A673 (cell line): ENCODE measurements at regions of chr13 and their contacts with region 1.

Region 1: GRCh38 chr13:102845630-102846260 is at the start of gene ERCC5:
- DNase-seq: peak; percentile 97
- H3K4me3 ChIP-seq: peak within 1 kb of the TSS; percentile 89
- H3K27ac ChIP-seq: peak within 1 kb of the TSS; percentile 92
- H3K4me1 ChIP-seq: peaks cover 9% of the 10 kb centered on the region
- H3K27me3 ChIP-seq: no peaks in the 10 kb centered on the region
- CTCF ChIP-seq: no peak
- total RNA-seq, gene ERCC5: 36.2 and 37.6 TPM in 2 replicates

Region 2: GRCh38 chr13:102580552-102581169 is 265.1 kb before region 1 on chr13:
- CTCF ChIA-PET with region 1: no interaction called
- POLR2A ChIA-PET with region 1: no interaction called
- intact Hi-C with region 1: loop called (anchors 1 kb)
- DNase-seq: peak; percentile 69
- H3K4me3 ChIP-seq: no peak overlapping the region
- H3K27ac ChIP-seq: no peak overlapping the region
- H3K4me1 ChIP-seq: no peaks in the 10 kb centered on the region
- H3K27me3 ChIP-seq: no peaks in the 10 kb centered on the region
- CTCF ChIP-seq: peak; percentile 79

Region 3: DNA sequence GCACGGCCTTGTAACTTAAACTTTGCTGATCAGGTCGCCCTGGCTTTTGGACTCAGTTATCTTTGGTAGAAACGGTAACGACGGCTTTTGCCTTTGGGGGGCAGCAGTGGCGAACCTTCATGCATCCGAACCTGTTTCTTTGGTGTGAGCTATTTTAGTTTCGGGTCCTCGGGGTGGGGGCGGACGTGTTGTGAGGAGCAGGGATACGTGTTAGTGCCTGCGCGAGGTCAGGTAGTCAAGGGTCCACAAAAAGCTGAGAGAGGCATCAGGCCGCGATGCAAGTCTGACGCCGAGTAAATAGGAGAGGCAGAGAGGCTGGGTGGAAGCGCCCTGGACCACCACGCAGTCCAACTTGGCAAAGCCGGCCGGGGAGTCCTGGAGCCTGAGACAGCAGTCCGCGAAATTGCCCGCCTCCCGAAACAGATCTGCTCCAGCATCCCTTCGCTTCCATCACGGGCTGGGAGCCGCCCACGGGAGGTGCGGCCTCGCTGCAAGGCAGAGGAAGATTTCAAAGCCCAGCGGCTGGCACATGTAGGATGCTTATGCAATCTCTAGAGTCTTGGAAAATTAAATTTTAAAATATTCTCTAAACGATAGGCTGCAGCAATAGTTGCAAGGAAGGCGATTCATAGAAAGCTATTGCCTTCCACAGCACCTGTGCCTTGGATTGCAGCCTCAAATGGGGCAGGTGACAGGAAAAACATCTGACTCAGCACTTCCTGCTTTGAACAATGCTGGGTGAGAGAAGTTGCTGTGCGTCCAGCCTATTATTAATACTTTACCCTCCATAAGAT is 253.6 kb before region 1 on chr13:
- CTCF ChIA-PET with region 1: interaction called, 3 read pairs
- POLR2A ChIA-PET with region 1: interaction called, 5 read pairs
- intact Hi-C with region 1: loop called (anchors 1 kb)
- DNase-seq: peak; percentile 86
- H3K4me3 ChIP-seq: peak overlapping the region; percentile 59
- H3K27ac ChIP-seq: peak overlapping the region; percentile 11
- H3K4me1 ChIP-seq: peaks cover 12% of the 10 kb centered on the region
- H3K27me3 ChIP-seq: no peaks in the 10 kb centered on the region
- CTCF ChIP-seq: peak; percentile 84

Region 4: DNA sequence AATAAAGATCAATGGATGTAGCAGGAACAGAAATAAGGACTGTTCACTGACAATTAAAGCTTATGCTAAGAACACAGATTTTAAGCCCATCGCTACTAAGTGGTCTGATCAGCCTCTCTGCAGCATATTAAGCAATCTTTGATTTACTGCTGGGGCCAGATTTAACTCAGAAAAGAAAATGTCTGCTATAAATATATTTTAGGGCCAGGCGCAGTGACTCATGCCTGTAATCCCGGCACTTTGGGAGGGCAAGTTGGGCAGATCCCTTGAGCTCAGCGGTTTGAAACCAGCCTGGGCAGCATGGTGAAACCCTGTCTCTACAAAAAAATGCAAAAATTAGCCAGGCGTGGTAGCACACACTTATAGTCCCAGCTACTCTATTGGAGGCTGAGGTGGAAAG is 193.9 kb before region 1 on chr13:
- CTCF ChIA-PET with region 1: no interaction called
- POLR2A ChIA-PET with region 1: no interaction called
- intact Hi-C with region 1: loop called (anchors 5 kb)
- DNase-seq: peak; percentile 85
- H3K4me3 ChIP-seq: no peak overlapping the region
- H3K27ac ChIP-seq: peak overlapping the region; percentile 49
- H3K4me1 ChIP-seq: peaks cover 24% of the 10 kb centered on the region
- H3K27me3 ChIP-seq: no peaks in the 10 kb centered on the region
- CTCF ChIP-seq: no peak

Region 5: GRCh38 chr13:102724923-102725322 is 120.8 kb before region 1 on chr13:
- CTCF ChIA-PET with region 1: interaction called, 3 read pairs
- POLR2A ChIA-PET with region 1: no interaction called
- intact Hi-C with region 1: loop called (anchors 1 kb)
- DNase-seq: peak; percentile 60
- H3K4me3 ChIP-seq: no peak overlapping the region
- H3K27ac ChIP-seq: no peak overlapping the region
- H3K4me1 ChIP-seq: peaks cover 3% of the 10 kb centered on the region
- H3K27me3 ChIP-seq: no peaks in the 10 kb centered on the region
- CTCF ChIP-seq: peak; percentile 65

Region 6: DNA sequence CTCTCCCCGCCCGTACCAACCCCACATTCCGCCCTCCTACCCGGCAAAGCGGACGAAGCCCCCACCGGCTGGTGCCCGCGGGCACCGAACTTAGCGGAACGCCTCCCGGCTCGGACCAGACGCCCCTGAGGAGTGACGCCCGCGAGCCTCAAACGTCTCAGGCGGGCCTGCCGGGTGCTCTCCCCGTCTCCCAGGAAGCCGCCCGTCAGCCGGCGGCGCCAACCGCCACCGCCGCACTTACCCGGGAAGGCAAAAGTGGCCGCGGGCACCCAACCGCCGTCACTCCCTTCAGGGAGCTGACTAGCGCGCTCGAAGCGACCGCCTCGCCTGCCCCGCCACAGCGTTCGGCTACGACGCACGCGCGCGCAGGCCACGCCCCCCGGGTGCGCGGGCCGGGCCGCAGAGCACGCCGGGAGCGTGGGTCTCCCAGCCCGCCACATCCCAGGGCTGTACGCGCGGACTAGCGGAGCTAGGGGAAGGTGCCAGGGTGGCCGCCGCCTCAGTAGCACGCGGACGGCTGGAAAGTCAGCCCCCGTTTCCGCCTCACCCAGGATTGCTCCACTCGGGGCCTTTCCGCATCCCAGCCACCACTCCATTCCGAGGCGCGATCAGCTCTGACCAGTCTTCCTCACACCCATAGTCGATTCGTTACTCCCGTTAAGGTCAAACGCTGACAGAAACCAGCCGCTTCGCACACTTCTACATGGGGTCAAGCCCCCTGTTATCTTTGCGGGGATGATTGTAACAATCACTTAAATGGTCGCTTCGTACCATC is 72.1 kb before region 1 on chr13 and contains the start of gene TEX30:
- CTCF ChIA-PET with region 1: no interaction called
- POLR2A ChIA-PET with region 1: no interaction called
- intact Hi-C with region 1: loop called (anchors 2 kb)
- DNase-seq: peak; percentile 94
- H3K4me3 ChIP-seq: peak within 1 kb of the TSS; percentile 94
- H3K27ac ChIP-seq: peak within 1 kb of the TSS; percentile 90
- H3K4me1 ChIP-seq: peaks cover 19% of the 10 kb centered on the region
- H3K27me3 ChIP-seq: no peaks in the 10 kb centered on the region
- CTCF ChIP-seq: no peak
- total RNA-seq, gene TEX30: 29.8 and 44.1 TPM in 2 replicates

Region 7: GRCh38 chr13:102798581-102799425 is 46.9 kb before region 1 on chr13 and contains the starts of genes BIVM and POGLUT2:
- CTCF ChIA-PET with region 1: interaction called, 6 read pairs
- POLR2A ChIA-PET with region 1: no interaction called
- intact Hi-C with region 1: loop called (anchors 1 kb)
- DNase-seq: peak; percentile 97
- H3K4me3 ChIP-seq: peak within 1 kb of the TSS; percentile 75
- H3K27ac ChIP-seq: peak within 1 kb of the TSS; percentile 84
- H3K4me1 ChIP-seq: peaks cover 16% of the 10 kb centered on the region
- H3K27me3 ChIP-seq: no peaks in the 10 kb centered on the region
- CTCF ChIP-seq: no peak
- total RNA-seq, gene BIVM: 19.5 and 21.9 TPM in 2 replicates
- total RNA-seq, gene POGLUT2: 10.8 and 12.0 TPM in 2 replicates